Prostate gland (tissue), 2 donors: ENCODE measurements at regions of chr9 and their contacts with region 1.

Region 1: GRCh38 chr9:32571969-32572899 is 725 bp downstream of the NDUFB6 start:
- DNase-seq: peak; percentile 74
- H3K4me3 ChIP-seq: peak overlapping the region; percentile 70 to 80
- H3K27ac ChIP-seq: peak overlapping the region; percentile 80 to 85
- H3K4me1 ChIP-seq: no peaks in the 10 kb centered on the region
- H3K27me3 ChIP-seq: no peaks in the 10 kb centered on the region
- CTCF ChIP-seq: peak; percentile 48 to 77 (median 64)
- POLR2A ChIP-seq: no peak

Region 2: DNA sequence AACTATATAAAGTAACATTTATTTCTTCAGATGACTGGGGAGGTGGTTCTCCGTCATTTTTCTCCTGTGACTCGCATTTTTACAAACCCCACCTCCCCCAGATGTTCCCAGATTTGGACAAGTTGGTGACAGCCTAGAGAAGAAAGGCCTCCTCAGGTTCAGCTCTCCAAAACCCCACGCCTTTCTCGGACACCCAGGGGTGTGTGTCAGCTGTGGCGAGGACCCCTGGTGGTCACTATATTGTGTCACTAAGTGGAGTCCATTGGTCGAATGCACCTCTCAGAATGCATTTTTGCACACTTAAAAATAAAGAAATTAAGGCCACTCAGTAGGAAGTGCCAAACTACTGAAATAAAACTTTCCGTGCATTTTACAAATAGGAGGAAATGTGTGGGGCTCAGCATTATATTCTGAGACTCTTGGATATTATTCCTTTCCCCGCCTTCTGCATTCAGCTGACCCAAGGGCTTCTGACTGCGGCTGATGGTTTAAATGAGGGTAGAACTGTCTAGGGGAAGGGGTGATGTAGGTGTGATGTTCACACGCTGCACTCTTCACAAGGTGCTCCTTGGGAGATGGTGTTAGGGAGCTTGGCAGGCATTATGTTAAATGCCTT is 140.2 kb before region 1 on chr9:
- intact Hi-C with region 1: loop called (anchors 10 kb)
- DNase-seq: peak; percentile 40
- H3K4me3 ChIP-seq: no peak overlapping the region
- H3K27ac ChIP-seq: no peak overlapping the region
- H3K4me1 ChIP-seq: no peaks in the 10 kb centered on the region
- H3K27me3 ChIP-seq: no peaks in the 10 kb centered on the region
- CTCF ChIP-seq: peak in 3 of 4 experiments; percentile 46 to 50 (median 48)
- POLR2A ChIP-seq: no peak

Region 3: GRCh38 chr9:32502464-32502863 is 69.8 kb before region 1 on chr9:
- intact Hi-C with region 1: no loop called
- DNase-seq: no peak
- H3K4me3 ChIP-seq: no peak overlapping the region
- H3K27ac ChIP-seq: no peak overlapping the region
- H3K4me1 ChIP-seq: no peaks in the 10 kb centered on the region
- H3K27me3 ChIP-seq: no peaks in the 10 kb centered on the region
- CTCF ChIP-seq: no peak
- POLR2A ChIP-seq: no peak

Region 4: DNA sequence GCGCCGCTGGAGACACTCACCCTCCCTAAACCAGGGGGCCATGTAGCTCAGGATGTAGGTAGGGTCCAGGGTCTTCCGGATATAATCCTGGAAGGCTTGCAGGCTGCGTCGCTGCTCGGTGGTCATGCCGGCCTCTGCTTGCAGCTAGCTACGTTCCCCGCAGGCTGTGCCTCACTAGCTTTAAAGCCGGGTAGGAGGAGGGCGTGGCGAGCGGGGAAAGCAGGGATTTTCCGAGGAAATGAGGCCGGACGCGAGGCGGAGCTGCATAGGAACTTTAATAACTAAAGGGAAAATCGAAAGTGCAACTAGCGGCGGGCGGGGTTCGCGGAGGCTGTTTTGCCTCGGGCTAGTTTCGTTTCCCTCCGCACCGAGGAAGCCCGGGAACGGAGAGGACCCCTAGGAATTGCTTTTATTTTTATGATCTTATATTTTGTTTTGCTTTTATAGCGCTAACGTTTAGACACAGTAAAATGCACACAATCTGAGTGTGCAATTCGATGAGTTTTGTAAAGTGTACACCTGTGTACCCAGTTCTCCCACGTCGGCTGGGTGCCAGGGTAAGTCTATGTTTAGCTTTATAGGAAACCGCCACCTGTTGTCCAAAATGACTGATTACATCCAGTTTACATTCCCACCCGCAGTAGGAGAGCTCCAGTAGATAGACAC is 46.1 kb before region 1 on chr9 and contains the start of gene RIGI:
- intact Hi-C with region 1: loop called (anchors 10 kb)
- DNase-seq: peak; percentile 90
- H3K4me3 ChIP-seq: peak within 1 kb of the TSS; percentile 40 to 58
- H3K27ac ChIP-seq: peak within 1 kb of the TSS; percentile 89 to 90
- H3K4me1 ChIP-seq: no peaks in the 10 kb centered on the region
- H3K27me3 ChIP-seq: no peaks in the 10 kb centered on the region
- CTCF ChIP-seq: peak in 3 of 4 experiments; percentile 30 to 53 (median 44)
- POLR2A ChIP-seq: peak; percentile 56
- total RNA-seq, gene RIGI: 8.2 to 9.5 TPM

Region 5: DNA sequence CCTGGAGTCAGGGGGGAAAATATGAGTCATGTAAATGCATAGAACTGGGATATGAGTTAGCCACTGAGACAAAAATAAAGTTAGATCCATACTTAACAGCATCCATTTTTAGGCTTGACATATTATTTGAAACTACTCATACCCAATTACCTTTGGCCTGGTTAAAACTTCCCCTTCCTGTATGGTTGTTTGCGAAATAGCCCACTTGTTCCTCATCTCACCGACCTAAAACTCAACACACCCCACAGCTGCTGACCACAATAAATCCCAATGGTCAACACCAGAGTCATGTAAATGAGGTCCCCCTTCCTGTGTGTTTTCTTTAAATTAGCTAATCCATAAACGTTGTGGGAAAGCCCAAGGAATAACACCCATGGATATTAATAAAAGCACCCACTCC is 155.9 kb after region 1 on chr9:
- intact Hi-C with region 1: no loop called
- DNase-seq: no peak
- H3K4me3 ChIP-seq: no peak overlapping the region
- H3K27ac ChIP-seq: no peak overlapping the region
- H3K4me1 ChIP-seq: no peaks in the 10 kb centered on the region
- H3K27me3 ChIP-seq: no peaks in the 10 kb centered on the region
- CTCF ChIP-seq: no peak
- POLR2A ChIP-seq: no peak